HepG2 (cell line): ENCODE measurements at regions of chr9 and their contacts with region 1.

Region 1: GRCh38 chr9:10059044-10059443 is 553.8 kb downstream of the PTPRD start:
- DNase-seq: no peak
- ATAC-seq: no peak
- H3K4me3 ChIP-seq: no peak overlapping the region
- H3K27ac ChIP-seq: no peak overlapping the region
- H3K4me1 ChIP-seq: 0 out of 2 replicates have a peak, but pooled peaks cover 5% of the 10 kb centered on the region
- H3K27me3 ChIP-seq: no peaks in the 10 kb centered on the region
- CTCF ChIP-seq: no peak
- EP300 ChIP-seq: no peak
- POLR2A ChIP-seq: no peak
- RAD21 ChIP-seq: no peak

Region 2: DNA sequence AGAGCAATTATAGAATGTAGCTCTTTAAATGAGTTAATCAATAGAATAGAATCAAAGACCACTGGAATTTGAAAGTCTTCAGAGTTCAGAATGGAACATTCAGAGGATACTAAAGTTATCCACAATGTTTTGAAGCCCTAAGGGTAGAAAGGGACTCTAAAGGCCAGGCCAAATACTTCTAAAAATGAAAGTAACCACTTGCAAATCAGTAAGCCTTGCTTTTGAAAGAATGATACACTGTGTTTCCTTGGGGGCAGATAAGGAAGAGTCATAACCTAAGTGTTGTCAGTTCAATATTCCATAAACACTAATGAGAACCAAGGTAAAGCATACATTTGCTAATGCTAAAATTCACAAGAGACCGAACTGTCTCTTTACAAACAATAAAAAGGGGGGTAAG is 259.8 kb before region 1 on chr9:
- CTCF ChIA-PET with region 1: no interaction called
- POLR2A ChIA-PET with region 1: no interaction called
- in situ Hi-C with region 1: no loop called
- intact Hi-C with region 1: no loop called
- DNase-seq: no peak
- ATAC-seq: no peak
- H3K4me3 ChIP-seq: no peak overlapping the region
- H3K27ac ChIP-seq: no peak overlapping the region
- H3K4me1 ChIP-seq: no peaks in the 10 kb centered on the region
- H3K27me3 ChIP-seq: no peaks in the 10 kb centered on the region
- CTCF ChIP-seq: no peak
- EP300 ChIP-seq: no peak
- POLR2A ChIP-seq: no peak
- RAD21 ChIP-seq: no peak

Region 3: GRCh38 chr9:10268531-10269485 is 209.8 kb after region 1 on chr9:
- CTCF ChIA-PET with region 1: interaction called, 10 read pairs
- POLR2A ChIA-PET with region 1: no interaction called
- in situ Hi-C with region 1: loop called (anchors 10 kb)
- intact Hi-C with region 1: loop called (anchors 1 kb)
- DNase-seq: peak; percentile 5
- ATAC-seq: peak; percentile 90
- H3K4me3 ChIP-seq: no peak overlapping the region
- H3K27ac ChIP-seq: no peak overlapping the region
- H3K4me1 ChIP-seq: no peaks in the 10 kb centered on the region
- H3K27me3 ChIP-seq: no peaks in the 10 kb centered on the region
- CTCF ChIP-seq: peak; percentile 67
- EP300 ChIP-seq: no peak
- POLR2A ChIP-seq: no peak
- RAD21 ChIP-seq: 0 out of 2 replicates have a peak, but pooled peaks have one; percentile 14